Aorta (tissue), 5 donors: ENCODE measurements at regions of chr2 and their contacts with region 1.

Region 1: DNA sequence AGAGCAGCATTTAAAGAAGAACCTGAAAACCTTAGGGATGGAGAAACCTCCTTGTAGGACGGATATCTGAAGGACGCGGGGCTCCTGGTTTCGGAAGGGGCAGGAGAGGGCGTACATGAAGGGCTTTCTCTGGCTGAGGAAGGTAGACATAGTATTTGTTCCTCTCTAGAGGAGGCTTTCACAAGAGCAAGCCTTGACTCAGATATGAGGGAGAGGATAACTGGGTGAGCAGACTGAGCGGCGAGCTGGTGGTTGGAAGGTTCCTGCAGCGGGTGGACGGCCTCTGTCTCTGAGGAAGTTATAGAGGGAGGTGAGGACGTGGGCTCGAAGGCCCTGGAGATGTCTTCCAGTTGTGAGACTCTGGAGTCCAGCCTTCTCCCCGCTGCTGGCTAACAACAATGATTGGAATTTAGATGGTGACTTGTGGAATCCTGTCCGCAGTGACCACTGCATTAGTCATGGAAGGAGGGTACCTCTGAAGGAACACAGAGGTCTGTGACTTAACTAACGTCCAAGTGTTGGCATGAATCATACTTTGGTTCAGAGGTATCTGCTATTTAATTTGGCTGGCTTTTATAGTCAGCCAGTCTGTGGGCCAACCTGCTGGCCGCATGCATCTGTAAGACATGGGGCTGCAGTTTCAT is 80.9 kb downstream of the ASAP2 start:
- DNase-seq: peak; percentile 69 to 75
- ATAC-seq: peak; percentile 69
- H3K4me3 ChIP-seq: no peak overlapping the region
- H3K27ac ChIP-seq: peak overlapping the region in 1 of 2 donors; percentile 72
- H3K4me1 ChIP-seq: peaks cover 4 to 7% of the 10 kb centered on the region in 2 donors
- H3K27me3 ChIP-seq: no peaks in the 10 kb centered on the region

Region 2: GRCh38 chr2:9212661-9213411 is 74.7 kb before region 1 on chr2:
- intact Hi-C with region 1: loop called in 1 of 2 experiments (anchors 5 kb)
- DNase-seq: peak in 1 of 2 donors; percentile 74
- ATAC-seq: peak; percentile 57
- H3K4me3 ChIP-seq: no peak overlapping the region
- H3K27ac ChIP-seq: peak overlapping the region; percentile 91 to 94
- H3K4me1 ChIP-seq: peaks cover 3 to 14% of the 10 kb centered on the region in 2 donors
- H3K27me3 ChIP-seq: no peaks in the 10 kb centered on the region

Region 3: DNA sequence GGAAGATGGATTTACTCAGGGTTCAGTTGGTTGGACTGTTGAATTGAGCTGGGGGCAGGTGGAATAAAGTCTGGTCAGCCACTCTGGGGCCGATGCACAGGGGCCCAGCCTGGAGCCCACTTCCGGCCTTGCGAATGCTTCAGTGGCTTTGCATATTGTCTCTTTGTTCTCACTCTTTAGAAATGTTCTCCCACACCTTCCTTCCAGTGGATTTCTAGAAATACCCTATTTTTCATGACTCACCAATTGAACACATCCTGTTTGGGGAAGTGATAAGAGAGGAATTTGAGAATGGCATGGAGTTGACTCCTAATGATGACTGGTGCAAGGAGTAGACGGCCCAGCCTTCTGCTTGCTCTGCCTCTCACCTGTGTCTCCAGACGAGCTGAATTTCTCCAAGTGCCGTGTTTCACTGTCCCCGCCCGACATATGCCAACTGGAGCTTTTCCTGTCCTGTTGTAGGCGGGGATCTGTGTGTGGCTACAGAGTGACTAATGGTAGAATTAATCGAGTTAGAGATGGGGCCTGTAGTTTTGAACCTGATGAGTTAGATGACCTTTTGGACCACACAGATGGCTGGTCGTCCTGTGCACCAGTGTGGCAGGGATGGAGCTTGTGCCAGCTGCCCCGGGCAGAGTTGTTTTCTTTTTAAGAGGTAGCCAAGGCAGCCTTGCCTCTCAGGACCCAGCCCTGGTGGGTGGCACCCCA is 52.7 kb before region 1 on chr2:
- intact Hi-C with region 1: loop called in 1 of 2 experiments (anchors 5 kb)
- DNase-seq: peak in 1 of 2 donors; percentile 57
- ATAC-seq: peak; percentile 68
- H3K4me3 ChIP-seq: no peak overlapping the region
- H3K27ac ChIP-seq: peak overlapping the region; percentile 89 to 94
- H3K4me1 ChIP-seq: peaks cover 4 to 24% of the 10 kb centered on the region in 2 donors
- H3K27me3 ChIP-seq: no peaks in the 10 kb centered on the region

Region 4: DNA sequence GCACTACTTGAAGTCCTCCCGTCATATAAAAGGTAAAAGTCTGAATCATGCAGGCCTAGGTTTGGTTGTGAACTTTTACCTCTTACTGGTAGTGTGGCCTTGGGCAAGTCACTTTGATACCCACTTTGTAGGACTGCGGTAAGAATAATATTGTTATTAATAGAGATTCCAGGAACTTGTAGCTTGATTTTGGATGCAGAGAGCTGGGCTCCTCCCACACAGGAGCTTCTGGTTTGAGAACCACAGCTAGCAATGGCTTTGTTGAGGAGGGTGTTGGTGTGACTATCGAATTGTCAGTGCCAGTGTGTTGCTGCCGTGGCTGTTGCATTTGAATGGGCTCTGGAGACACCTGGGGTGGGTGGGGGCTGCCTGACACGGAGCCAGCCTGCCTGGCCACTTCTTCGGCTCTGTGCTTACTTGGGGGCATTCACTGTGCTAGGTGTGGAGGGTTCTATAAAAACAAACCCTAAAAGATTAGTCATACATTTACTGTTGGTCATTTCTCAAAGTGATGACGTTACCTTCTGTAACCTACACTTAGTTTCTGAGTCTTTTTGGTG is 42.5 kb before region 1 on chr2:
- intact Hi-C with region 1: no loop called
- DNase-seq: peak in 1 of 2 donors; percentile 43
- ATAC-seq: no peak
- H3K4me3 ChIP-seq: no peak overlapping the region
- H3K27ac ChIP-seq: no peak overlapping the region
- H3K4me1 ChIP-seq: peaks cover 6 to 10% of the 10 kb centered on the region in 2 donors
- H3K27me3 ChIP-seq: no peaks in the 10 kb centered on the region

Region 5: GRCh38 chr2:9333591-9334171 is 46.2 kb after region 1 on chr2:
- intact Hi-C with region 1: loop called in 1 of 2 experiments (anchors 5 kb)
- DNase-seq: peak in 1 of 2 donors; percentile 77
- ATAC-seq: peak; percentile 79
- H3K4me3 ChIP-seq: no peak overlapping the region
- H3K27ac ChIP-seq: peak overlapping the region; percentile 23 to 58
- H3K4me1 ChIP-seq: no peaks in the 10 kb centered on the region
- H3K27me3 ChIP-seq: no peaks in the 10 kb centered on the region